SK-N-SH (cell line): ENCODE measurements at regions of chr11 and their contacts with region 1.

Region 1: DNA sequence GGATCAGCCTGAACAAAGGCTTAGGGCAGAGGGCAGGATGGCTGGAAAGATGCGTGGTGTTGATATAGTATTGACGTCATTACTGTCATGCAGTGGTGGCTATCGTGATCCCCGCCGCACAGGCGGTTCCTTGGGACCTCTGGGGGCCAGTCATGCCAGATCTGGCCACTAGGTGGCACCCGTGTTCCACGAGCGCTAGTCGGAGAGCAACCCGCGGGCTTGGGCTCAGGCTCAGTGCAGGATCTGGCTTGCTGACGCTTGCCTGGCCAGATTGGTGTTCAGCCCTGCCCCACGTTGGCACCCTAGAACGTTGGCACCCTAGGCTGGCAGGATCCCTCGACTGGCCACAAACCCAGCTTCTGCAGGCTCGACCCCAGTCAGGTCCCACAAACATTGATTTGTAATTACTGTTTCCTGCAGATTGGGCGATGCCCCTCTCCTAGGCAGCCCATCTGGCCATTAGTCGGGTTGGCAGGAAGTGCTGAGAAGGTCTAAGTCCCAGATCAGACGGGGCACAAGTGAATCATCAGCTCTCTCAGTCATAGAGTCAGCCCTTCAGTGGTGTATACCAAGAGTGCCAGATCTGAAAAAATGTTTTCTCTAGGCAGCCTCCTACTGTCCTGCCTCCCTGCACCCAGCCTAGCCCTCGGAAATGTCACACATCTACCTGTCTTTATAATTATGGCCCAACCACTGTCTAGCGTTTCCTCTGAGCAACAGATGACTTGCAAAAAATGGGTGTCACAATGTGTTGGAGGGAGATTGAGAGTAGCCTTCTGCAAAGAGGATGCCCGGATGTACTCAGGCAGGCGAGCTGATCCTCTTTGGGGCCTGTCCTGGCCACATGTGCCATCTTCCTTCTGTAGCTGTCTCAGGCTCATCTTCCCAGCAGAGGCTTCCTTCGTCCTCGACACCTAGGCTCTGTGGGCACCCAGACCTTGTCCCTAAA is 315.3 kb downstream of the TMEM135 start:
- DNase-seq: peak; percentile 84
- H3K4me3 ChIP-seq: peak overlapping the region in 1 of 2 experiments; percentile 46; a peak in 2 of 4 replicates
- H3K27ac ChIP-seq: no peak overlapping the region
- H3K4me1 ChIP-seq: peaks cover 0 to 6% of the 10 kb centered on the region in 2 experiments; a peak in 1 of 4 replicates
- H3K27me3 ChIP-seq: no peaks in the 10 kb centered on the region
- CTCF ChIP-seq: peak; percentile 98
- EP300 ChIP-seq: no peak
- RAD21 ChIP-seq: peak; percentile 93

Region 2: GRCh38 chr11:87338046-87338639 is 14.9 kb before region 1 on chr11:
- CTCF ChIA-PET with region 1: interaction called, 14 read pairs
- POLR2A ChIA-PET with region 1: no interaction called
- DNase-seq: no peak
- H3K4me3 ChIP-seq: no peak overlapping the region
- H3K27ac ChIP-seq: no peak overlapping the region
- H3K4me1 ChIP-seq: no peaks in the 10 kb centered on the region
- H3K27me3 ChIP-seq: no peaks in the 10 kb centered on the region
- CTCF ChIP-seq: no peak
- EP300 ChIP-seq: no peak
- RAD21 ChIP-seq: no peak

Region 3: DNA sequence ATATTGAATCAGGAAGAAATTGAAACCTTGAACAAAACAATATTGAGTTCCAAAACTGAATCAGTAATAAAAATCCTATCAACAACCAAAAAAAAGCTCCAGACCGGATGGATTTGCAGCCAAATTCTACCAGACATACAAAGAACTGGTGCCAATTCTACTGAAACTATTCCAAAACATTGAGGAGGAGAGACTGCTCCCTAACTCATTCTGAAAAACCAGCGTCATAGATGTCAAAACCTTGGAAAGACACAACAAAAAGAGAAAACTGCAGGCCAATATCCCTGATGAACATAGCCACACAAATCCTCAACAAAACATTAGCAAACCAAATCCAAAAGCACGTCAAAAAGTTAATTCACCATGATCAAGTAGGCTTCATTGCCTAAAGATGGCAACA is 38.5 kb after region 1 on chr11:
- CTCF ChIA-PET with region 1: no interaction called
- POLR2A ChIA-PET with region 1: no interaction called
- DNase-seq: no peak
- H3K4me3 ChIP-seq: no peak overlapping the region
- H3K27ac ChIP-seq: no peak overlapping the region
- H3K4me1 ChIP-seq: no peaks in the 10 kb centered on the region
- H3K27me3 ChIP-seq: no peaks in the 10 kb centered on the region
- CTCF ChIP-seq: no peak
- EP300 ChIP-seq: no peak
- RAD21 ChIP-seq: no peak

Region 4: GRCh38 chr11:87405843-87406242 is 52.8 kb after region 1 on chr11:
- CTCF ChIA-PET with region 1: interaction called, 14 read pairs
- POLR2A ChIA-PET with region 1: no interaction called
- DNase-seq: no peak
- H3K4me3 ChIP-seq: no peak overlapping the region
- H3K27ac ChIP-seq: no peak overlapping the region
- H3K4me1 ChIP-seq: no peaks in the 10 kb centered on the region
- H3K27me3 ChIP-seq: no peaks in the 10 kb centered on the region
- CTCF ChIP-seq: no peak
- EP300 ChIP-seq: no peak
- RAD21 ChIP-seq: no peak